ENCODE measurements at regions of chr14 and their contacts with region 1.

Region 1: DNA sequence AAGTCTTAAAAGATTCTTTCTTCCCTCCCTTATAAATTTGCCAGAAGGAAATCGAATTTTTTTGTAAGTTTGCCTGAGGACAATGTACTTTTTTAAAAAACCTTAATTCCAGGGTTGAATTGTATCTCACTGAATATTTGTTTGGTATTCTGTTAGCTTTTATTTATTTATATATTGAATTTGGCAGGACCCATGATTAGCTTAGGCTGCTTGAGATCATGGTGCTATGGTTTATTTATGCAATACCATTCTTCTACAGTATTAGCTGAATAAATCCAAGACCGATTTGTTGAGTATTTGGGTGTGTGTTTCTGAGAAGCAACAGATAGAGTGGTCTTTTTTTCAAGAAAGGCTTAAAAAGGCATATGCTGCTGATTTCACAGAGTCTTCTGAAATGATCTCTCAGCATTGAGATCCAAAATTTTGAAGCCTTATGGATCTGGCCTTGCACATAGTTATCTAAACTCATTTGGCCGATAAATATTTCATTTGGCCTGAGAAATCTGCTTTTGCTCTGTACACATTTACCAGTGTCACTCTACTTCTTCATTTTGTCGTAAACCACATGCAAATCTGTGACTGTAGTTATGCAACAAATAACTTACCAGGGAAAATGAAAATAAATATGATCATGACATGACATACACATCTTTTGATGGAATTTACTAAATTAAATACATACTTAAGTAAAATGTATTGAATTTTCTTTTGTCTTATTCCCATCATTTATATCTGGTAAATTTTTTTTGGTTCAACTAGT is 265.8 kb upstream of the FLRT2 start:
- DNase-seq: no peak
- H3K4me3 ChIP-seq: no peak overlapping the region
- H3K27ac ChIP-seq: no peak overlapping the region
- H3K4me1 ChIP-seq: no peaks in the 10 kb centered on the region
- H3K27me3 ChIP-seq: no peaks in the 10 kb centered on the region
- CTCF ChIP-seq: no peak
- POLR2A ChIP-seq: no peak

Region 2: GRCh38 chr14:85867450-85867849 is 603.4 kb after region 1 on chr14:
- intact Hi-C with region 1: loop called (anchors 10 kb)
- DNase-seq: no peak
- H3K4me3 ChIP-seq: no peak overlapping the region
- H3K27ac ChIP-seq: no peak overlapping the region
- H3K4me1 ChIP-seq: no peaks in the 10 kb centered on the region
- H3K27me3 ChIP-seq: no peaks in the 10 kb centered on the region
- CTCF ChIP-seq: no peak
- POLR2A ChIP-seq: no peak

Measured in breast epithelium (tissue), 4 donors.